ENCODE measurements at regions of chr14 and their contacts with region 1.

Region 1: GRCh38 chr14:96297000-96297399 is 41.0 kb downstream of the BDKRB1 start:
- DNase-seq: peak; percentile 63
- H3K4me3 ChIP-seq: no peak overlapping the region
- H3K27ac ChIP-seq: no peak overlapping the region
- H3K4me1 ChIP-seq: no peaks in the 10 kb centered on the region
- H3K27me3 ChIP-seq: no peaks in the 10 kb centered on the region

Region 2: GRCh38 chr14:95255487-95255886 is 1041.5 kb before region 1 on chr14:
- in situ Hi-C with region 1: no loop called
- DNase-seq: no peak
- H3K4me3 ChIP-seq: no peak overlapping the region
- H3K27ac ChIP-seq: no peak overlapping the region
- H3K4me1 ChIP-seq: 0 out of 2 replicates have a peak, but pooled peaks cover 3% of the 10 kb centered on the region
- H3K27me3 ChIP-seq: no peaks in the 10 kb centered on the region

Region 3: GRCh38 chr14:96204151-96205058 is 92.6 kb before region 1 on chr14 and contains the start of gene BDKRB2:
- in situ Hi-C with region 1: no loop called
- DNase-seq: peak; percentile 95
- H3K4me3 ChIP-seq: peak within 1 kb of the TSS; percentile 86
- H3K27ac ChIP-seq: peak within 1 kb of the TSS; percentile 32
- H3K4me1 ChIP-seq: peaks cover 27% of the 10 kb centered on the region; the same call in 1 of the 2 replicates
- H3K27me3 ChIP-seq: no peaks in the 10 kb centered on the region
- total RNA-seq, gene BDKRB2: 14.4 and 15.8 TPM in 2 replicates

Region 4: GRCh38 chr14:96409701-96410100 is 112.7 kb after region 1 on chr14:
- in situ Hi-C with region 1: loop called (anchors 10 kb)
- DNase-seq: no peak
- H3K4me3 ChIP-seq: no peak overlapping the region
- H3K27ac ChIP-seq: no peak overlapping the region
- H3K4me1 ChIP-seq: no peaks in the 10 kb centered on the region
- H3K27me3 ChIP-seq: no peaks in the 10 kb centered on the region; the same call in 1 of the 2 replicates

Region 5: GRCh38 chr14:97757491-97757890 is 1460.5 kb after region 1 on chr14:
- in situ Hi-C with region 1: no loop called
- DNase-seq: no peak
- H3K4me3 ChIP-seq: no peak overlapping the region
- H3K27ac ChIP-seq: no peak overlapping the region
- H3K4me1 ChIP-seq: no peaks in the 10 kb centered on the region
- H3K27me3 ChIP-seq: no peaks in the 10 kb centered on the region

Measured in GM23248 (cell line).